ENCODE measurements at regions of chr9 and their contacts with region 1.

Region 1: GRCh38 chr9:4117835-4118610 is 181.8 kb downstream of the GLIS3 start:
- DNase-seq: peak; percentile 47
- H3K4me3 ChIP-seq: no peak overlapping the region
- H3K27ac ChIP-seq: no peak overlapping the region
- H3K4me1 ChIP-seq: no peaks in the 10 kb centered on the region
- CTCF ChIP-seq: peak; percentile 79

Region 2: DNA sequence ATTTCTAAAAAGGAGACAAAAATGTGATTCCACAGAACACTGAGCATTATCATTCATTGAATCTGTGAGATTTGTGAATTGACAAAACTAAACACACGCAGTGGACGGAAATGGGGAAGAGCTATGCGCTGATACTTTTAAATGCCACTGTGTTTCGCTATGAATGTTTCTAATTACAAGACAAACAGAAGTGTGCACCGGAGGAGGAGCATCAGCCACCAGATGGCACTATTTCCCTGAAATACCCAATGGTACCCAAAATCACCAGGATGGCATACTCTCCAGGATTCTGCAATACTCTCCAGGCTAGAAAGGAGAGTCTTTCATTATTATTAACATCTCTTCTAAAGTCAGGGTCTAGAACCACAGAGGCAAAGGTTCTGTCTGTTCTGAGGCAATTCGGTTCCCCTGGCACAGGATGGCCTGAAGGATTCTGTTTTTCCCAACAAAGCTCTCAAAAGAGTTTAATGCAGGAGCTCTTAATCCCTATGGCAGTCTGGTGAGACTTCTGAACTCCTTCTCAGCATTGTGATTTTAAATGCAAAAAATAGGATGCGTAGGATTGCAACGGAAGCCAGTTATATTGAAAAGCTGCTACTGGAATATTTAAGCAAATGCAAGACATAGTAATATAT is 1260.3 kb before region 1 on chr9:
- CTCF ChIA-PET with region 1: no interaction called
- POLR2A ChIA-PET with region 1: no interaction called
- intact Hi-C with region 1: loop called (anchors 5 kb)
- DNase-seq: peak; percentile 75
- H3K4me3 ChIP-seq: no peak overlapping the region
- H3K27ac ChIP-seq: no peak overlapping the region
- H3K4me1 ChIP-seq: no peaks in the 10 kb centered on the region
- CTCF ChIP-seq: peak; percentile 93

Region 3: DNA sequence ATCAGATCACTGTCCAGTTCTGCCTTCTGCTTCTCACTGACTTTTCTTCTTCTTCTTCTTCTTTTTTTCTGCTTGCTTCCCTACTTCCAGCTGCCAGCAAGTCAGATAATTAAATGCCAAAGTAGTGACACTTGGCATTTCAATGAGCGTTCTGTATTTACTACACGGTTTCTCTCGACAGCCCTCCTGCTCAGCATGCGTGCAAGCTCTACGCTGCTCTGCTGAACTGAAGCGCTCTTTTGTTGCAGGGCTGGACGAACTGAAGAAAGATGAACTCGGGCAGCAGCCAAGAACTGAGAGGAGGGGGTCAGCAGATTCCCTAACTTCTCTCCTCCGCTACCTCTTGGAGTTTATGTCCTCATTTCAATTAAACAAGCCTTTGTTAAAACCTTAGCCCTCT is 137.3 kb before region 1 on chr9:
- CTCF ChIA-PET with region 1: no interaction called
- POLR2A ChIA-PET with region 1: no interaction called
- intact Hi-C with region 1: no loop called
- DNase-seq: no peak
- H3K4me3 ChIP-seq: no peak overlapping the region
- H3K27ac ChIP-seq: no peak overlapping the region
- H3K4me1 ChIP-seq: no peaks in the 10 kb centered on the region
- CTCF ChIP-seq: no peak